ENCODE measurements at regions of chr11 and their contacts with region 1.

Region 1: DNA sequence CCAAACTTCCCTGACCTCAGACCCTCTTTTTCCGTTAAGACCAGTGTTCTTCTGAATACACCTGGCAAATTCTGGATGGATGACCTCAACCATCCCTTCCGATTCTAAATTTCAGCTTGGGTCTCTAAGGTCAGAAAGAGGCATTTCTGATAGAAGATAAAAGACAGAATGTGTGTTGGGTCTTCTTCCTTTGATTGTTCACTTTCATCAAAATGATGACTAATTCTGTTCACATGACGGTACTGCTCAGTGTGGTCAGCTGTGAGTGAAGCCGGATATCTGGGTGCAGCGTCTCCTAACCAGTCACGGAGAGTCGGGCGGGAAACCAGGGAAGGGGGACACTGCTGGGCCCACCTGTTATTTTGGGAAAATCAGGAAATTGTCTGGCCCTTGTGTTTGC is 151.6 kb upstream of the NAV2 start:
- DNase-seq: no peak
- H3K4me3 ChIP-seq: no peak overlapping the region
- H3K27ac ChIP-seq: no peak overlapping the region
- H3K4me1 ChIP-seq: no peaks in the 10 kb centered on the region
- H3K27me3 ChIP-seq: no peaks in the 10 kb centered on the region
- CTCF ChIP-seq: no peak

Region 2: GRCh38 chr11:19633276-19633675 is 72.3 kb after region 1 on chr11:
- intact Hi-C with region 1: no loop called
- DNase-seq: no peak
- H3K4me3 ChIP-seq: no peak overlapping the region
- H3K27ac ChIP-seq: no peak overlapping the region
- H3K4me1 ChIP-seq: no peaks in the 10 kb centered on the region
- H3K27me3 ChIP-seq: no peaks in the 10 kb centered on the region
- CTCF ChIP-seq: no peak

Region 3: DNA sequence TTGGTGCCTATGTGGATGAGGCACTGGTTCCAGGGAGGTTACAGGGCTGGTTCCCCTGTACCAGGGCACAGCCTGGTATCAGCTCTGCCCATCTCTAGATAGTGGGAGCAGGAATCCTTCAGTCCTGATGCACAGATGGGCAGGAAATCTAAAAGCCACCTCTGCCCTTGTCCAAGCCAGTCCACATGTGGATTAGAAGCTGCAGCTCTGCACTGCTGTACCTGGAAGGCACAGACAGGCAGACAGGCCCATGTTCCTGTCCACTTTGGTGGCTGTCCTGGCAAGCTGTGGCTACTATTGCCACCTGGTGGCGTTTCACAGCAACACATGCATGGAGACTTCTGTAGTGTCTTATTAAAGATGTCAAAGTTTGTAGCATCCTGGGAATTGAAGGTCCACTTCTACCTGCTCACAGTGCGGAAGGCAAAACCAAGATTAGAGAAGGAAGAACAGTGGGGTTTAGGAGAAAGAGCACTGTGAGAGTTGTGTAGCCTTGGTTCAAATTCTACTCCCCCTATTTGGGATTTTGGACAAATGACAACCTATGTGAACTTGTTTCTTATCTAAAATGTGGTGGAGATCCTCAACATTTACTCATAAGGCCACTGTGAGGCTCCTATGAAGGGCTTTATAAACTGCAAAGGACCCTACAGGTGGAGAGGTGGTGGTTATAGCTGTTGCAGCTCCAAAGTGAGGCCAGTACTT is 181.7 kb after region 1 on chr11:
- intact Hi-C with region 1: loop called (anchors 2 kb)
- DNase-seq: peak; percentile 80
- H3K4me3 ChIP-seq: no peak overlapping the region
- H3K27ac ChIP-seq: no peak overlapping the region
- H3K4me1 ChIP-seq: no peaks in the 10 kb centered on the region
- H3K27me3 ChIP-seq: no peaks in the 10 kb centered on the region
- CTCF ChIP-seq: peak; percentile 86

Region 4: DNA sequence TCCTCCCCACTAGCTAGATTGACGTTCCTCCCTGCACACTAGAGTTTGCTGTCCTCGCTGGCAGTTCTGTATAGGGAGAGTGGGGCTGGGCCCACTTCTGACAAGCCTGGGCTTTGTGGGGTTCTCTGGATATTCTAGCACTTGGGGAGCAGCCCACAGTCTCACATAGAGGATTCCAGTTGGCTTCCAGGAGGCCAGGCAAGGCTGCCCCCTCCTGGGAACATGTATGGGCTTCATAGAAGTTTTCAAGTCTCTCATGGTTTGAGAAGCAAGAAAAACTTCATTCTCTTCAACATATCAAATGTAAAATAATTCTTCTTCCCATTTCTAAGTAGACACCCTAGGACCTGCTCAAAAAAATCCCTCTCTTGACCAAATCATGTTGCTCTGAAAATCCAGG is 239.2 kb after region 1 on chr11:
- intact Hi-C with region 1: loop called (anchors 10 kb)
- DNase-seq: no peak
- H3K4me3 ChIP-seq: no peak overlapping the region
- H3K27ac ChIP-seq: no peak overlapping the region
- H3K4me1 ChIP-seq: peaks cover 12% of the 10 kb centered on the region
- H3K27me3 ChIP-seq: no peaks in the 10 kb centered on the region
- CTCF ChIP-seq: no peak

Region 5: GRCh38 chr11:19903620-19904069 is 342.6 kb after region 1 on chr11:
- intact Hi-C with region 1: loop called (anchors 2 kb)
- DNase-seq: peak; percentile 82
- H3K4me3 ChIP-seq: no peak overlapping the region
- H3K27ac ChIP-seq: no peak overlapping the region
- H3K4me1 ChIP-seq: no peaks in the 10 kb centered on the region
- H3K27me3 ChIP-seq: no peaks in the 10 kb centered on the region
- CTCF ChIP-seq: peak; percentile 83